ENCODE measurements at regions of chr13 and their contacts with region 1.

Region 1: GRCh38 chr13:24671386-24672107 is 8.7 kb upstream of the ATP12A start:
- DNase-seq: peak; percentile 54 to 67
- ATAC-seq: peak; percentile 87 to 94
- H3K4me3 ChIP-seq: peak overlapping the region; percentile 28; the same call in 2 of the 3 replicates
- H3K27ac ChIP-seq: peak overlapping the region in 1 of 2 experiments; percentile 57; a peak in 2 of 6 replicates
- H3K4me1 ChIP-seq: 0 out of 3 replicates have a peak, but pooled peaks cover 3% of the 10 kb centered on the region
- CTCF ChIP-seq: peak; percentile 60
- EP300 ChIP-seq: no peak
- POLR2A ChIP-seq: no peak
- RAD21 ChIP-seq: peak; percentile 40 to 46; a peak in 4 of 5 replicates

Region 2: GRCh38 chr13:24605923-24606372 is 65.6 kb before region 1 on chr13:
- CTCF ChIA-PET with region 1: interaction called, 13 read pairs
- POLR2A ChIA-PET with region 1: no interaction called
- DNase-seq: peak in 1 of 2 experiments; percentile 34
- ATAC-seq: peak; percentile 54 to 76; a peak in 3 of 6 replicates
- H3K4me3 ChIP-seq: no peak overlapping the region
- H3K27ac ChIP-seq: no peak overlapping the region
- H3K4me1 ChIP-seq: no peaks in the 10 kb centered on the region
- CTCF ChIP-seq: 0 out of 3 replicates have a peak, but pooled peaks have one; percentile 15
- EP300 ChIP-seq: no peak
- POLR2A ChIP-seq: no peak
- RAD21 ChIP-seq: peak in 1 of 2 experiments; percentile 33; a peak in 1 of 5 replicates

Measured in A549 (cell line).